ENCODE measurements at regions of chr6 and their contacts with region 1.

Region 1: DNA sequence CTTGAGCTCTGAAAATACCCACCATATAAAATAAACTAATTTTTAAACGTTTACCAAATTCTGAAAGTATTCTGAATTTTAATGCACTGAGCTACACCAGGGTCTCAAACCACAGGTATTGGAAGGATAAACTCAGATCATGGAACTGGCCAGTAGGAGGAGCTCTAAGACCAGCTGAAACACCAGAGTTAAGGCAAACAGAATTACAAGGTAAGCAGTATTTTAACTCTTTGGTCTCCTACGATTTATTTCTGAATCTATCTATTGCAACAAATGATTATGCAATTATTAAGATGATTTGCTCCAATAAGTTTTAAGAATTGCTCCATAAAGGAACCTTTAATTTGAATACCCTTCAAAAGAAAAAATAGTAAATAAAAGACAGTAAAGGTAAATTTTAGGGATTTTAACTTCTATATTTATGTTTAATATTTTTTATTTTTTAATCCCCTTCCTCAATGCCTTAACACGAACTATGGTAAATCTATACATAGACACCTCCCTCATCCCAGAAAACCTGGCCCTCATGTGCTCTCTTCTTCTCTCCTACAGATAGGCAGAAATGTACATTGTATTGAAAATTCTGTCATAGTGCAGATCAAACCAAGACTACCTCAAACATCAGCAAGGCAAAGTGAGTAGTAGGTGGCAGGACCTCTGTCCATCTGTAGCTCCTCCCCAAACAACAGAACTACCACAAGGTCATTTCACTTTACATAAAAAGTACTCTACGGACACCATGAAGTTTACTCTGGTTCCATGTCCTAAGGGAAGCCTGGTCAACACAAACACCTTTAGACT is 58.4 kb downstream of the SMLR1 start:
- DNase-seq: peak in 1 of 3 donors; percentile 94
- ATAC-seq: peak; percentile 91
- H3K4me3 ChIP-seq: no peak overlapping the region
- H3K4me1 ChIP-seq: no peaks in the 10 kb centered on the region
- CTCF ChIP-seq: peak; percentile 65

Region 2: GRCh38 chr6:130537447-130537846 is 348.1 kb before region 1 on chr6:
- intact Hi-C with region 1: no loop called
- DNase-seq: no peak
- ATAC-seq: no peak
- H3K4me3 ChIP-seq: no peak overlapping the region
- H3K4me1 ChIP-seq: no peaks in the 10 kb centered on the region
- CTCF ChIP-seq: no peak

Region 3: GRCh38 chr6:131116749-131117360 is 231.3 kb after region 1 on chr6:
- intact Hi-C with region 1: loop called (anchors 1 to 5 kb)
- DNase-seq: peak in 1 of 3 donors; percentile 61
- ATAC-seq: peak; percentile 73
- H3K4me3 ChIP-seq: no peak overlapping the region
- H3K4me1 ChIP-seq: no peaks in the 10 kb centered on the region
- CTCF ChIP-seq: no peak

Measured in mucosa of descending colon (tissue), 3 donors.